Esophagus squamous epithelium (tissue), 5 donors: ENCODE measurements at regions of chr4 and their contacts with region 1.

Region 1: GRCh38 chr4:38023347-38024205 is 63.4 kb downstream of the PTTG2 start:
- DNase-seq: no peak
- H3K4me3 ChIP-seq: no peak overlapping the region
- H3K27ac ChIP-seq: no peak overlapping the region
- H3K4me1 ChIP-seq: no peaks in the 10 kb centered on the region
- H3K27me3 ChIP-seq: no peaks in the 10 kb centered on the region
- CTCF ChIP-seq: no peak
- POLR2A ChIP-seq: no peak

Region 2: GRCh38 chr4:37594108-37594507 is 429.5 kb before region 1 on chr4:
- intact Hi-C with region 1: no loop called
- DNase-seq: no peak
- H3K4me3 ChIP-seq: no peak overlapping the region
- H3K27ac ChIP-seq: no peak overlapping the region
- H3K4me1 ChIP-seq: no peaks in the 10 kb centered on the region
- H3K27me3 ChIP-seq: no peaks in the 10 kb centered on the region
- CTCF ChIP-seq: no peak
- POLR2A ChIP-seq: no peak

Region 3: DNA sequence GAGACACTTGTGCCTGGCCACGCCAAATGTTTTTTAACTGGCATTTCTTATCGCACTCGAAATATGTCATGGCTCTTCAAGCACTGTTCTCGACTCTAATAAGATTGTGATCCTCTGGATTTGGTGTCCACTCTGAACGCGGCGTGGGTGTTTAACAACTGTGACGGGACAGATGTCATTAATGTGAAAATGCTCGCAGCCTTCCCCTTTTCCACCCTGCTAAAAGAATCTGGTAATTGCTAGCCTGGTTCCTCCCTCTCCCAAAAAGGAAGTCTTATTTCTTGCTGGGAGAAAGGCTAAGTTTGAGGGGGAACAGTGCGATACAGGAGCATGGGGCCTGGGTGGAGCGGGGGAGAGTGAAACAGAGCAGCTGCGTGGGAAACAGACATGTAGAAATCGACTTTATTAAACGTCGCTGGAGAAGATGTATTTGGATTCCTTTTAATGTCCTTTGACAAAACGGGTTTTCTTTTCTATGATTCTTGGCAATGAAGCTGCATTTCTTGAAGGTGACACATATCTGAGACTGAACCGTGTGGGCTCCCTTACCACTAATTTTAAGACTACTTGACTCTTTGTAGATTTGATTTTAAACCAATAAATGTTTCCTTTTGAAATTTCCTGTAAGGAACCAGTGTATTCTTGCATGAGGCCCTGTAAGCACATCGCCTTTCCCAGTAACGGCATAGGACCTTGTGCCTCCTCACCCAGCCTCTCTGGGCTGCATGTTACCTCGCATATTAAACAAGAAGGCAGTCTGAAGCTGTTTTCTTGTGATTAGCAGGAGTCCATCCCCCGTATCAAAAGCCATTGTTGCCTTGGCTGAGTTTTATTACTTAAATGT is 114.9 kb before region 1 on chr4:
- intact Hi-C with region 1: loop called (anchors 10 kb)
- DNase-seq: no peak
- H3K4me3 ChIP-seq: no peak overlapping the region
- H3K27ac ChIP-seq: peak overlapping the region in 2 of 4 donors; percentile 39 to 43
- H3K4me1 ChIP-seq: no peaks in the 10 kb centered on the region
- H3K27me3 ChIP-seq: no peaks in the 10 kb centered on the region
- CTCF ChIP-seq: no peak
- POLR2A ChIP-seq: no peak

Region 4: GRCh38 chr4:38105475-38106220 is 82.1 kb after region 1 on chr4:
- intact Hi-C with region 1: no loop called
- DNase-seq: no peak
- H3K4me3 ChIP-seq: no peak overlapping the region
- H3K27ac ChIP-seq: no peak overlapping the region
- H3K4me1 ChIP-seq: peaks cover 0 to 19% (median 0%) of the 10 kb centered on the region in 3 donors
- H3K27me3 ChIP-seq: no peaks in the 10 kb centered on the region
- CTCF ChIP-seq: no peak
- POLR2A ChIP-seq: no peak